Calu3 (cell line): ENCODE measurements at regions of chr11 and their contacts with region 1.

Region 1: DNA sequence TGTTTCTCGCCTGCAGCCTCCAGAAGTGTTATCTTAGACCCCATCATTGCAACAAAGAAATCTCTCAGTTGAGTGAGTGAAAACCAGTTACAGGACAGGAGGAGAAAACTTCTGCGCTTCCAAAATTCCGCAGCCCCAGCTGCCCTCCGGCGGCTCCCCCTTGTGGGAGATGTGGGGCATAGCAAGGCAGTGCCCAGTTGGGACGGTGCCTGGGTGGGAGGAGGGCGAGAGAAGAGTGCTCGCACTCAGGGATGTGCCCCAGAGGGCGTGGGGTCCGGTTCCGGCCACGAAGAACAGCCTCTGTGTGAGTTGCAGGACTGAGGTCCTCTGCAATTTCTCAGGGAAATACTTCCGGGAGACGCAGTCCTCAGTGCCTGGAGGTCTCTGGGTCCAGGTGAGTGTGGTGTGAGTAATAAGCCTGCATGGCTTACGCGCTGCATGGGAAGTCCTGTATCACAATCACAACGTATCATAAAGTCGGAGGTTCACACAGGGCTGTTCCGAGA is 87.0 kb upstream of the BLID start:
- DNase-seq: peak; percentile 65
- H3K4me3 Mint-ChIP-seq: peak overlapping the region; percentile 46
- H3K27ac Mint-ChIP-seq: no peak overlapping the region
- H3K4me1 Mint-ChIP-seq: peaks cover 17% of the 10 kb centered on the region
- H3K27me3 Mint-ChIP-seq: peaks cover 61% of the 10 kb centered on the region
- CTCF ChIP-seq: peak; percentile 86

Region 2: GRCh38 chr11:121767433-121767832 is 435.6 kb before region 1 on chr11:
- CTCF ChIA-PET with region 1: no interaction called
- intact Hi-C with region 1: no loop called
- DNase-seq: no peak
- H3K4me3 Mint-ChIP-seq: no peak overlapping the region
- H3K27ac Mint-ChIP-seq: no peak overlapping the region
- H3K4me1 Mint-ChIP-seq: no peaks in the 10 kb centered on the region
- H3K27me3 Mint-ChIP-seq: peaks cover 69% of the 10 kb centered on the region
- CTCF ChIP-seq: no peak

Region 3: GRCh38 chr11:122020902-122021301 is 182.1 kb before region 1 on chr11:
- CTCF ChIA-PET with region 1: no interaction called
- intact Hi-C with region 1: loop called (anchors 5 kb)
- DNase-seq: no peak
- H3K4me3 Mint-ChIP-seq: no peak overlapping the region
- H3K27ac Mint-ChIP-seq: no peak overlapping the region
- H3K4me1 Mint-ChIP-seq: no peaks in the 10 kb centered on the region
- H3K27me3 Mint-ChIP-seq: peaks cover 4% of the 10 kb centered on the region
- CTCF ChIP-seq: no peak

Region 4: GRCh38 chr11:122108192-122108799 is 94.7 kb before region 1 on chr11:
- CTCF ChIA-PET with region 1: interaction called, 13 read pairs
- intact Hi-C with region 1: loop called (anchors 2 kb)
- DNase-seq: peak; percentile 19
- H3K4me3 Mint-ChIP-seq: no peak overlapping the region
- H3K27ac Mint-ChIP-seq: no peak overlapping the region
- H3K4me1 Mint-ChIP-seq: peaks cover 6% of the 10 kb centered on the region
- H3K27me3 Mint-ChIP-seq: peaks cover 16% of the 10 kb centered on the region
- CTCF ChIP-seq: no peak

Region 5: GRCh38 chr11:122733318-122733717 is 530.3 kb after region 1 on chr11:
- CTCF ChIA-PET with region 1: no interaction called
- intact Hi-C with region 1: no loop called
- DNase-seq: no peak
- H3K4me3 Mint-ChIP-seq: no peak overlapping the region
- H3K27ac Mint-ChIP-seq: no peak overlapping the region
- H3K4me1 Mint-ChIP-seq: peaks cover 25% of the 10 kb centered on the region
- H3K27me3 Mint-ChIP-seq: no peaks in the 10 kb centered on the region
- CTCF ChIP-seq: no peak